ENCODE measurements at regions of chr10 and their contacts with region 1.

Region 1: GRCh38 chr10:48973065-48973464 is 33.4 kb upstream of the LRRC18 start:
- DNase-seq: no peak
- H3K4me3 ChIP-seq: no peak overlapping the region
- H3K27ac ChIP-seq: no peak overlapping the region
- H3K27me3 ChIP-seq: peaks cover 2% of the 10 kb centered on the region
- CTCF ChIP-seq: no peak

Region 2: GRCh38 chr10:49068672-49069217 is 95.7 kb after region 1 on chr10:
- CTCF ChIA-PET with region 1: no interaction called
- POLR2A ChIA-PET with region 1: no interaction called
- DNase-seq: no peak
- H3K4me3 ChIP-seq: no peak overlapping the region
- H3K27ac ChIP-seq: no peak overlapping the region
- H3K27me3 ChIP-seq: no peaks in the 10 kb centered on the region
- CTCF ChIP-seq: no peak

Region 3: GRCh38 chr10:49207113-49207512 is 234.0 kb after region 1 on chr10:
- CTCF ChIA-PET with region 1: interaction called, 11 read pairs
- POLR2A ChIA-PET with region 1: no interaction called
- DNase-seq: no peak
- H3K4me3 ChIP-seq: no peak overlapping the region
- H3K27ac ChIP-seq: no peak overlapping the region
- H3K27me3 ChIP-seq: peaks cover 26% of the 10 kb centered on the region
- CTCF ChIP-seq: no peak

Measured in AG04450 (cell line).